Ascending aorta (tissue), 2 donors: ENCODE measurements at regions of chr9 and their contacts with region 1.

Region 1: GRCh38 chr9:16710888-16711287 is 159.6 kb downstream of the BNC2 start:
- DNase-seq: no peak
- H3K4me3 ChIP-seq: no peak overlapping the region
- H3K27ac ChIP-seq: no peak overlapping the region
- H3K4me1 ChIP-seq: peaks cover 0 to 2% of the 10 kb centered on the region in 2 donors
- H3K27me3 ChIP-seq: no peaks in the 10 kb centered on the region
- CTCF ChIP-seq: no peak

Region 2: GRCh38 chr9:16521868-16522411 is 188.9 kb before region 1 on chr9:
- intact Hi-C with region 1: loop called (anchors 5 kb)
- DNase-seq: peak in 1 of 2 donors; percentile 72
- H3K4me3 ChIP-seq: no peak overlapping the region
- H3K27ac ChIP-seq: peak overlapping the region; percentile 58 to 64
- H3K4me1 ChIP-seq: peaks cover 0 to 14% of the 10 kb centered on the region in 2 donors
- H3K27me3 ChIP-seq: no peaks in the 10 kb centered on the region
- CTCF ChIP-seq: no peak

Region 3: GRCh38 chr9:16732546-16732945 is 21.7 kb after region 1 on chr9:
- intact Hi-C with region 1: no loop called
- DNase-seq: no peak
- H3K4me3 ChIP-seq: no peak overlapping the region
- H3K27ac ChIP-seq: no peak overlapping the region
- H3K4me1 ChIP-seq: peaks cover 0 to 2% of the 10 kb centered on the region in 2 donors
- H3K27me3 ChIP-seq: no peaks in the 10 kb centered on the region
- CTCF ChIP-seq: no peak

Region 4: GRCh38 chr9:17669206-17669605 is 958.3 kb after region 1 on chr9:
- intact Hi-C with region 1: no loop called
- DNase-seq: no peak
- H3K4me3 ChIP-seq: no peak overlapping the region
- H3K27ac ChIP-seq: no peak overlapping the region
- H3K4me1 ChIP-seq: no peaks in the 10 kb centered on the region
- H3K27me3 ChIP-seq: no peaks in the 10 kb centered on the region
- CTCF ChIP-seq: no peak